Esophagus muscularis mucosa (tissue), 4 donors: ENCODE measurements at regions of chr1 and their contacts with region 1.

Region 1: GRCh38 chr1:153946622-153947241 is at the start of gene DENND4B:
- DNase-seq: no peak
- H3K4me3 ChIP-seq: peak within 1 kb of the TSS; percentile 78 to 98 (median 88)
- H3K27ac ChIP-seq: peak within 1 kb of the TSS; percentile 98 to 100 (median 98)
- H3K4me1 ChIP-seq: peaks cover 27 to 37% (median 29%) of the 10 kb centered on the region in 4 donors
- H3K27me3 ChIP-seq: no peaks in the 10 kb centered on the region
- CTCF ChIP-seq: peak in 2 of 3 experiments; percentile 95 to 99
- EP300 ChIP-seq: no peak
- POLR2A ChIP-seq: no peak
- total RNA-seq, gene DENND4B: 19.2 to 30.4 (median 26.2) TPM

Region 2: DNA sequence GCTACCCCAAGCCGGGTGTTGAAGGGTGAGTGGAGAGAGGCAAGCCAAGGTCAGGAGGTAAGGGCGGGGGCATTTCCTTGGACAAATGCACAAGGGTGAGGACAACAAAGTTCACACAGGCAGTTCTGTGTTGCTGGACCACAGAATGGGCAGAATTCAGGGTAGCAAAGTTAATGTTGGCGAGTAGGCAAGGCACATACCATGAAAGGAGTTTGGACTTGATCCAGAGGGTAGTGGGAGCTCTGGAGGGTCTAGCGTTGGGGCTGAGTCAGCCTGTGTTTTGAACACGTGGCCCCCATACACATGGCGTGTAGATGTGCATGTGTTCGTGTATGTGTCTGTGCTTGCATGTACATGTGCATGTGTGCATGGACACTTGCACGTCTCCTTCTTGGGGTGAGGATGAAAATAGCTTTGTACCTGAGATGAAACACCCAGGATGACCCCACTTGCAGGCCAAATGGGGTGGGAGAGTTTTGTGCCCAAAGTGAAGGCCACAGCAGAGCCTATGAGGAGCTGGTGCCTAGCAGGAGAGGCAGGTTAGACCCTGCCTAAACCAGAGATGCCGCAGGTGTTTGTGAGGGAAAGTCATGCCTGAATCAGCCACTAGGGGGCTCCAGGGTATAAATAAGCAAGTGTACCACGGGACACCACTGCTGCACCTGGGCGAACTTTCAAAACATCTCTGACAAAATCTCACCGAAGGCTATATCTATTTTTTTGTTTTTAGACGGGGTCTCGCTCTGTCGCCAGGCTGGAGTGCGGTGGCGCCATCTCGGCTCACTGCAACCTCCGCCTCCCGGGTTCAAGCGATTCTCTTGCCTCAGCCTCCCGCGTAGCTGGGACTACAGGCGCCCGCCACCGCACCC is 149.7 kb before region 1 on chr1:
- intact Hi-C with region 1: loop called (anchors 2 kb)
- DNase-seq: no peak
- H3K4me3 ChIP-seq: no peak overlapping the region
- H3K27ac ChIP-seq: no peak overlapping the region
- H3K4me1 ChIP-seq: peaks cover 0 to 8% (median 1%) of the 10 kb centered on the region in 4 donors
- H3K27me3 ChIP-seq: no peaks in the 10 kb centered on the region
- CTCF ChIP-seq: peak; percentile 89 to 93 (median 91)
- EP300 ChIP-seq: no peak
- POLR2A ChIP-seq: no peak

Region 3: GRCh38 chr1:153827168-153827964 is 119.4 kb before region 1 on chr1:
- intact Hi-C with region 1: loop called (anchors 10 kb)
- DNase-seq: no peak
- H3K4me3 ChIP-seq: no peak overlapping the region
- H3K27ac ChIP-seq: no peak overlapping the region
- H3K4me1 ChIP-seq: peaks cover 5 to 19% (median 18%) of the 10 kb centered on the region in 4 donors
- H3K27me3 ChIP-seq: no peaks in the 10 kb centered on the region
- CTCF ChIP-seq: no peak
- EP300 ChIP-seq: no peak
- POLR2A ChIP-seq: no peak

Region 4: GRCh38 chr1:153842006-153842471 is 104.7 kb before region 1 on chr1:
- intact Hi-C with region 1: no loop called
- DNase-seq: no peak
- H3K4me3 ChIP-seq: no peak overlapping the region
- H3K27ac ChIP-seq: no peak overlapping the region
- H3K4me1 ChIP-seq: no peaks in the 10 kb centered on the region
- H3K27me3 ChIP-seq: no peaks in the 10 kb centered on the region
- CTCF ChIP-seq: no peak
- EP300 ChIP-seq: no peak
- POLR2A ChIP-seq: no peak